HCT116 (cell line): ENCODE measurements at regions of chrX and their contacts with region 1.

Region 1: DNA sequence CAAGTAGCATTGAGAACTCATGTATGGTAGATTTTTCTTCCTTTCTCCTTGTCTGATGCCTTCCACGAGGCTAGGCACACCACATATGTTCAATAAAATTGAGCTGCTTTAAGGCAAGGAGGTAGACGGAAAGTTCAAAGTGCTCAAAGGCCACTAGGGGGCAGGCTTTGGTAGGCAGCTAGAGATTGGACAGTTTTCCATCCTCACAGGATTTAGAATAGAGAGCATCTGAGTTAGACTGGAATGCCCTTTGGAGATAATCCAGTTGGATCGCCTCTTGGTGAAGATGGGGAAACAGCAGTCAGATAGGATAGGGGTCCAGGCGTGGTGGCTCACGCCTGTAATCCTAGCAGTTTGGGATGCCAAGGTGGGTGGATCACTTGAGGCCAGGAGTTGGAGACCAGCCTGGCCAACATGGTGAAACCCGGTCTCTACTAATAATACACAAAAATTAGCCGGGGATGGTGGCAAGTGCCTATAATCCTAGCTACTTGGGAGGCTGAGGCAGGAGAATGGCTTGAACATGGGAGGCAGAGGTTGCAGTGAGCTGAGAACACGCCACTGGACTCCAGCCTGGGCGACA is 30.4 kb downstream of the ELF4 start:
- DNase-seq: peak; percentile 26
- ATAC-seq: peak; percentile 89
- H3K4me3 ChIP-seq: no peak overlapping the region
- H3K27ac ChIP-seq: no peak overlapping the region
- H3K4me1 ChIP-seq: no peaks in the 10 kb centered on the region
- H3K27me3 ChIP-seq: no peaks in the 10 kb centered on the region
- CTCF ChIP-seq: peak; percentile 63 to 67 (median 67); a peak in 5 of 6 replicates
- POLR2A ChIP-seq: no peak
- RAD21 ChIP-seq: peak; percentile 86

Region 2: GRCh38 chrX:130120746-130121504 is 41.0 kb after region 1 on chrX:
- CTCF ChIA-PET with region 1: interaction called, 4 read pairs
- POLR2A ChIA-PET with region 1: no interaction called
- RAD21 ChIA-PET with region 1: no interaction called
- intact Hi-C with region 1: loop called (anchors 10 kb)
- DNase-seq: no peak
- ATAC-seq: peak; percentile 87
- H3K4me3 ChIP-seq: peak overlapping the region; percentile 26 to 47
- H3K27ac ChIP-seq: peak overlapping the region; percentile 69
- H3K4me1 ChIP-seq: peaks cover 23 to 43% of the 10 kb centered on the region in 2 experiments
- H3K27me3 ChIP-seq: no peaks in the 10 kb centered on the region
- CTCF ChIP-seq: peak in 2 of 3 experiments; percentile 53 to 64; a peak in 4 of 6 replicates
- POLR2A ChIP-seq: no peak
- RAD21 ChIP-seq: no peak

Region 3: GRCh38 chrX:130190801-130191200 is 110.9 kb after region 1 on chrX:
- CTCF ChIA-PET with region 1: interaction called, 13 read pairs
- POLR2A ChIA-PET with region 1: interaction called, 4 read pairs
- RAD21 ChIA-PET with region 1: no interaction called
- intact Hi-C with region 1: loop called (anchors 1 kb)
- DNase-seq: no peak
- ATAC-seq: no peak
- H3K4me3 ChIP-seq: no peak overlapping the region
- H3K27ac ChIP-seq: no peak overlapping the region
- H3K4me1 ChIP-seq: peaks cover 0 to 2% of the 10 kb centered on the region in 2 experiments; a peak in 1 of 4 replicates
- H3K27me3 ChIP-seq: no peaks in the 10 kb centered on the region
- CTCF ChIP-seq: no peak
- POLR2A ChIP-seq: no peak
- RAD21 ChIP-seq: no peak

Region 4: GRCh38 chrX:130196466-130196865 is 116.6 kb after region 1 on chrX:
- CTCF ChIA-PET with region 1: interaction called, 13 read pairs
- POLR2A ChIA-PET with region 1: interaction called, 4 read pairs
- RAD21 ChIA-PET with region 1: no interaction called
- intact Hi-C with region 1: loop called (anchors 1 kb)
- DNase-seq: no peak
- ATAC-seq: no peak
- H3K4me3 ChIP-seq: no peak overlapping the region
- H3K27ac ChIP-seq: no peak overlapping the region
- H3K4me1 ChIP-seq: peaks cover 0 to 2% of the 10 kb centered on the region in 2 experiments; a peak in 1 of 4 replicates
- H3K27me3 ChIP-seq: no peaks in the 10 kb centered on the region
- CTCF ChIP-seq: no peak
- POLR2A ChIP-seq: no peak
- RAD21 ChIP-seq: no peak